Activated T-helper 1 cell treated with anti-CD3 and anti-CD28 coated beads, Interleukin-12 subunit alpha, Interleukin-12 subunit beta, Interleukin-2, Interleukin-4 antibody, amounts not matched to agents 30 ng/mL and 10 ng/mL and 1 ng/mL, durations not matched to agents 14 hours and 24 hours and 36 hours (primary cell): ENCODE measurements at regions of chr5 and their contacts with region 1.

Region 1: DNA sequence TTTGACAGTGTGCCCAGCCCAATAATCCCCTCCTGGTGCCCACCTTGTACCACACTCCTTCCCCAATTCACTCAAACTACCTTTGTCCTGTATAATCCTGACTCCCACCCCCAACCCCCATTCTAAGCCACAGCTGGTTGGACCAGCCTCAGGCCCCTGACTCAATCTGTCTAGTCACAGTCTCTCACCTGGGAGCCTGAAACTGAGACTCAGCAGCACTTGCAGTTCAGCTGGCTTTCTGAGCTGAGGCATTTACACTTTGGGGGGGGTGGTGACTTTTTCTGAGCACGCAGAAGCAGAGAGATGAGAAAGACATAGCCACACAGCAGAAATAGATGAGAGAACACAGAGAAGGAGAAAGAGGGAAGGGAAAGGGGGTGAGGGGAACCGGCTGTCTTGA is 247.3 kb downstream of the MAN2A1 start:
- DNase-seq: peak; percentile 24
- H3K4me3 Mint-ChIP-seq: peak overlapping the region; percentile 25
- H3K27ac Mint-ChIP-seq: peak overlapping the region; percentile 56
- H3K4me1 Mint-ChIP-seq: peaks cover 26% of the 10 kb centered on the region
- H3K27me3 Mint-ChIP-seq: no peaks in the 10 kb centered on the region

Region 2: GRCh38 chr5:109756543-109757185 is 180.3 kb before region 1 on chr5:
- intact Hi-C with region 1: no loop called
- DNase-seq: no peak
- H3K4me3 Mint-ChIP-seq: no peak overlapping the region
- H3K27ac Mint-ChIP-seq: no peak overlapping the region
- H3K4me1 Mint-ChIP-seq: peaks cover 28% of the 10 kb centered on the region
- H3K27me3 Mint-ChIP-seq: no peaks in the 10 kb centered on the region

Region 3: DNA sequence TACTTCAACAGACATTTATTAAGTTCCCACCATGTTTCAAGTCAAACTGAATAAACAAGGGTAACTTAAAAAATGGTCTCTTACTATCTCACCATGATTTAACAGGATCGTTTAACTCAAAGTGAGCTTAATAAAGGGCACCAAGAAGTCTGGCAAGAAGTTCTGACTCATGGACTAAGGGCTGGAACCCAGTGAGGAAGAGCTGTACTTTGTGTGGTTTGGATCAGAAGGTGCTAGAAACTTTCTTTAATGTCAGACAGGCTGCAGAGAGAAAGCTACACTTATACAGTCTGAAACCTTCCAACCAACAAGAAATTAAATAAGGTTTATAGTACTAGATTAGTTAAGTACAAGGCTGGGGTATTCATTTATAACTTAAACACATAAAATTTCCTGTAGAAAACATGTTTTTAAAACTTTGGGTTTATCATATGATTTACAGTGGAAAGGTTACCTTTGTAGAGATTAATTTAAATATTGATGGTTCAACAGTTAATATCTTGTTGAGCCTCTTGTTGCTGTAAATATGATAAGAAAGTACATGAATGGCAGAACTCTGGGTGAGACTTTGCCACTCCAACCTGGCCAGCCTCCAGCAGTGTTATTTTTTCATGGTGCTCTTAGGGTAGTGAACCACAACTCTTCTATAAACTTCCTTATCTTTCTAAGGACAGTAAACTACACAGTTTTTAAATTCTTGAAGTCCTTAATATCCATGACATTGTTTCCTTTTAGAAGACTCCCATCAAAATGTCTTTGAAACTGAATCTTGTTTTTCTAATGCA is 84.4 kb before region 1 on chr5:
- intact Hi-C with region 1: loop called (anchors 5 kb)
- DNase-seq: no peak
- H3K4me3 Mint-ChIP-seq: no peak overlapping the region
- H3K27ac Mint-ChIP-seq: no peak overlapping the region
- H3K4me1 Mint-ChIP-seq: peaks cover 56% of the 10 kb centered on the region
- H3K27me3 Mint-ChIP-seq: no peaks in the 10 kb centered on the region

Region 4: DNA sequence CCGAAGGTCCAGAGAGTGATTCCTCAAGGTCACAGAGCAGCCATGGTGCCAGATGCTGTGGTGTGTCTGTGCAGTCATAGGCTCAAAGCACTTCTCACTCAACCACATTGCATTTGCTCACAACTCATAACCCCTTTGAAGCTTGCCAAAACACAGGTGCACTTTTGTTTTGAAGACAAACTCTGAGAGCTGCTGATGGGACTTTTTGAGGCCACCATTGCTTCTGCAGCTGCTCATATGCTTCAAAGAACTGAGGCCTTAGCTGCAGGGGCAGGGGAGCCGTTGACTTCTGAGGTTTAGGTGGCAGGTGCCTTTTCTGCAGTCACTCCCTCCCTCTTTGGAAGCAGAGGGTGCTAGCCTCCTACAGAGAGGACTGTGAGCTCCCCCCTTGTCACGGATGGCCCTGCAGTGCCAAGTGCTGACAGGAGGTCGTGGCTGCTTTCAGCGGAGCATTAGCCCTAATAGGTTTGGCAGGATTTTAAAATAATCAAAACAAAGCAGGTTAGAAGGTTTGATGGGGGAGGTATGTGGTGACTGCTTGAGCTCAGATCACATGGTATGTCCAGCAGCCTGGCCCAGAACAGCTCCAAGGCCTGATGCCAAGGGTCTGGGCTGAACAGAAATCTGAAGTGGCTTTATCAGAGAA is 15.1 kb before region 1 on chr5:
- intact Hi-C with region 1: loop called (anchors 1 kb)
- DNase-seq: peak; percentile 61
- H3K4me3 Mint-ChIP-seq: peak overlapping the region; percentile 74
- H3K27ac Mint-ChIP-seq: peak overlapping the region; percentile 95
- H3K4me1 Mint-ChIP-seq: peaks cover 39% of the 10 kb centered on the region
- H3K27me3 Mint-ChIP-seq: no peaks in the 10 kb centered on the region

Region 5: DNA sequence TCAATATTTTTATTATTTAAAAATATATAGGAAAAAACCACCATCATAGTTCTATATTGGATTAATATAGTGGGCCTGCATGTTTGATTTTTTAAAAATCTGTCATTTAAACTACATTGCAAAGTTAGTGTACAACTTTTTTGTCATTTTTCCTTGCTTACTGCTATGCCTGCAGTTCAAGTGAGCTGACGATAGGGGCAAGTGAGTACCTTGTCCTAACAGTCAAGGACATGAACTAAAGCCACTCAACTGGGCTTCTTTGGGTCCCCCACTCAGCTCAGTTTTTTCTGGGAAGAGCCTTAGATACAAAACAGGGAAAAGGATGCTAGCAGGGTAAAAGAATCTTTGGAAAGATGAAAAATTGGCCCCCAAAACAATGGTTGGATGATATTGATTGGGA is 22.7 kb after region 1 on chr5:
- intact Hi-C with region 1: loop called (anchors 2 kb)
- DNase-seq: no peak
- H3K4me3 Mint-ChIP-seq: no peak overlapping the region
- H3K27ac Mint-ChIP-seq: no peak overlapping the region
- H3K4me1 Mint-ChIP-seq: peaks cover 11% of the 10 kb centered on the region
- H3K27me3 Mint-ChIP-seq: no peaks in the 10 kb centered on the region

Region 6: DNA sequence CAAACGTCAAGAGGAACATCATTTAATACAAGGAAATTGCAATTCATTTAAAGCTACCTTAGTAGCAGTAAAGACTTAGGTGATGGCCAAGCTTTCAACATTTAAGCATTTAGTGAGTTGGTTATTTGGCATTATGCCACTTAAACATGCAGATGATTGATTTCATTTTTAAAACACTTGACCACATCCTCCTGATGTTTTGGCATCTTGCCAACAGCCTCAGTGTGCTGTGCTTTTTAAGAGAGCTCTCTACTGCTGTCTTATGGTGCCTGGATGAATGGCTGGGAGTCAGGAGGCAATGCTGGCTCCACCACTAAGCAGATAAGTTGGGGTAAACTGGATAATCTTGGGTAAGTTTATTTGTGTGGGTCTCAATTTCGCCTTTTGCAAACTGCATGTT is 117.2 kb after region 1 on chr5:
- intact Hi-C with region 1: loop called (anchors 1 kb)
- DNase-seq: peak; percentile 72
- H3K4me3 Mint-ChIP-seq: no peak overlapping the region
- H3K27ac Mint-ChIP-seq: peak overlapping the region; percentile 74
- H3K4me1 Mint-ChIP-seq: peaks cover 27% of the 10 kb centered on the region
- H3K27me3 Mint-ChIP-seq: no peaks in the 10 kb centered on the region

Region 7: GRCh38 chr5:110414360-110414759 is 477.4 kb after region 1 on chr5:
- intact Hi-C with region 1: no loop called
- DNase-seq: no peak
- H3K4me3 Mint-ChIP-seq: no peak overlapping the region
- H3K27ac Mint-ChIP-seq: no peak overlapping the region
- H3K4me1 Mint-ChIP-seq: no peaks in the 10 kb centered on the region
- H3K27me3 Mint-ChIP-seq: peaks cover 2% of the 10 kb centered on the region